ENCODE measurements at regions of chr5 and their contacts with region 1.

Region 1: DNA sequence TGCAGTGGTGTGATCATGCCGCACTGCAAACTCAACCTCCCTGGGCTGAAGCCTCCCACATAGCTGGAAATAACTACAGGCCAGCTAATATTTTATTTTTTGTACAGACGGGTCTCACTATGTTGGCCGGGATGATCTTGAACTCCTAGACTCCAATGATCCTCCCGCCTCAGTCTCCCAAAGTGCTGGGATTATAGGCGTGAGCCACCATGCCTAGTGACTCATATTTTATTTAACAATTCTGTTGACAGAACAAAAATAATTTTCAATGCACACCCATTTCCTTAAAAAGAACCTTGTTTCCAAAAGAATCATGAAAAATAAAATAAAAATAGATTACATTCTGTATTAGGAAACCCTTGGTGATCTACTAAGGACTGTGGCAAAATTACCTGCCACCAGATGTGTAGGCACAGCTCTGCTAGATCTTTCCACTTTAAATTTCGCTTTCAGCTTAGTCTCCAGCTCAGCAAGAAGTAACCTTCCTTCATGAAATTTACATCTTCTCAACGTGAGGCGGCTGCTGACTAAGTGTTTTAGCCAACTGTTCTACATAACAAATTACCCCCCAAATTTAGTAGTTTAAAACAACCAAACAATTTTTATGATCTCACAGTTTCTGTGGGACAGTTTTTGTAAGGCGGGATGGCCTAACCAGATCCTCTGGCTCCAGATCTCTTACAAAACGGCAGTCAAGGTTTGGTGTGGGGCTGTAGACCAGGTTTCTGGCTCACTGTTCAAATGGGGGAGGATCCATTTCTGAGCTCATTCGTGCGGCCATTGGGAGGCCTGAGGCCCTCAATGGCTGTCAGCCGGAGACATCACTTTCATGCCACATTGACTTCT is 32.6 kb upstream of the GOLPH3 start:
- DNase-seq: no peak
- H3K4me3 Mint-ChIP-seq: no peak overlapping the region
- H3K27ac Mint-ChIP-seq: no peak overlapping the region
- H3K4me1 Mint-ChIP-seq: peaks cover 23% of the 10 kb centered on the region
- H3K27me3 Mint-ChIP-seq: peaks cover 2% of the 10 kb centered on the region

Region 2: DNA sequence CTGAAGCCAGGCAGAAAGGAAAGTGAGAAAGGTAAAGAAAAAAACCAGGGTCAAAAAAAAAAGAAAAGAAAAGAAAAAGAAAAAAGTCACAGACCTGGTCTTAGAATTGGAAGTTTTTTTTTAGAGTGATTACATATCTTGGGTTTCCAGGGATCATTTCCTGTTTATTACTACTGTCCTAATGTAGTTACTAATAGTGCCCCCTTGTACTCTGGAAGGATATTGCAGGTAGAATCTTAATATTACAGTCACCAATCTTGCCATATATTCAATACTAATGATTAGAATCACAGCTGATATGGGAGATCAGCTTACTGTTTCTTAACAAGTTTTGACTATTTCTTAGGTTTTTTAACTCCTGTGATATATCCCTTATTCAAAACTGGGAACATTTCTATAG is 1556.4 kb before region 1 on chr5:
- intact Hi-C with region 1: no loop called
- DNase-seq: no peak
- H3K4me3 Mint-ChIP-seq: no peak overlapping the region
- H3K27ac Mint-ChIP-seq: no peak overlapping the region
- H3K4me1 Mint-ChIP-seq: no peaks in the 10 kb centered on the region
- H3K27me3 Mint-ChIP-seq: no peaks in the 10 kb centered on the region

Region 3: GRCh38 chr5:32138839-32139493 is 67.8 kb before region 1 on chr5:
- intact Hi-C with region 1: loop called (anchors 1 kb)
- DNase-seq: no peak
- H3K4me3 Mint-ChIP-seq: no peak overlapping the region
- H3K27ac Mint-ChIP-seq: peak overlapping the region; percentile 86
- H3K4me1 Mint-ChIP-seq: peaks cover 14% of the 10 kb centered on the region
- H3K27me3 Mint-ChIP-seq: no peaks in the 10 kb centered on the region

Region 4: GRCh38 chr5:32312647-32313523 is 106.2 kb after region 1 on chr5 and contains the start of gene MTMR12:
- intact Hi-C with region 1: loop called (anchors 2 kb)
- DNase-seq: peak; percentile 100
- H3K4me3 Mint-ChIP-seq: peak within 1 kb of the TSS; percentile 96
- H3K27ac Mint-ChIP-seq: peak within 1 kb of the TSS; percentile 95
- H3K4me1 Mint-ChIP-seq: peaks cover 38% of the 10 kb centered on the region
- H3K27me3 Mint-ChIP-seq: no peaks in the 10 kb centered on the region
- total RNA-seq, gene MTMR12: 26.2 and 29.9 TPM in 2 replicates

Region 5: GRCh38 chr5:32471784-32472183 is 265.1 kb after region 1 on chr5:
- intact Hi-C with region 1: no loop called
- DNase-seq: no peak
- H3K4me3 Mint-ChIP-seq: no peak overlapping the region
- H3K27ac Mint-ChIP-seq: no peak overlapping the region
- H3K4me1 Mint-ChIP-seq: no peaks in the 10 kb centered on the region
- H3K27me3 Mint-ChIP-seq: peaks cover 4% of the 10 kb centered on the region

Region 6: DNA sequence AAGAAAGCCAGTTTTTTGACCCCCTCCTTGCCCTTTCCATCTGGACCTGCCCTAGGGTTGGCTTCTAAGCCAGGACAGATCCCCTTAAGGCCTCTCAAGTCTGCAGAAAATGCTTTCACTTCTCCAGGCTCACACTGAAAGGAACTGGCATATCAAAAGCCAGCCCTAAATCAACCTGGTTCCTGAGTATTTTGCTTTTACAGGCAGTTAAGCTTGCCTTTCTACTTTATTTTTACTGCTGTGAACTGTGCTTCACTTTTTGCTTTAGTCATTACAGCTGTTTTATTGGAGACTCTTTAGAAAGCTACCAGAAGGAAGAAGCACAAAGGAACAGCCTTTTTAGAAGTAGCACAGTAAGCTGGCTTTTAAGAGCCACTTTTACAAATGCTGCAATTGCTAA is 1239.1 kb after region 1 on chr5:
- intact Hi-C with region 1: loop called (anchors 5 kb)
- DNase-seq: no peak
- H3K4me3 Mint-ChIP-seq: no peak overlapping the region
- H3K27ac Mint-ChIP-seq: no peak overlapping the region
- H3K4me1 Mint-ChIP-seq: peaks cover 53% of the 10 kb centered on the region
- H3K27me3 Mint-ChIP-seq: no peaks in the 10 kb centered on the region

Measured in activated T-helper 1 cell treated with anti-CD3 and anti-CD28 coated beads, Interleukin-12 subunit alpha, Interleukin-12 subunit beta, Interleukin-2, Interleukin-4 antibody, amounts not matched to agents 30 ng/mL and 10 ng/mL and 1 ng/mL, durations not matched to agents 14 hours and 24 hours and 36 hours (primary cell).